HepG2 (cell line): ENCODE measurements at regions of chr1 and their contacts with region 1.

Region 1: DNA sequence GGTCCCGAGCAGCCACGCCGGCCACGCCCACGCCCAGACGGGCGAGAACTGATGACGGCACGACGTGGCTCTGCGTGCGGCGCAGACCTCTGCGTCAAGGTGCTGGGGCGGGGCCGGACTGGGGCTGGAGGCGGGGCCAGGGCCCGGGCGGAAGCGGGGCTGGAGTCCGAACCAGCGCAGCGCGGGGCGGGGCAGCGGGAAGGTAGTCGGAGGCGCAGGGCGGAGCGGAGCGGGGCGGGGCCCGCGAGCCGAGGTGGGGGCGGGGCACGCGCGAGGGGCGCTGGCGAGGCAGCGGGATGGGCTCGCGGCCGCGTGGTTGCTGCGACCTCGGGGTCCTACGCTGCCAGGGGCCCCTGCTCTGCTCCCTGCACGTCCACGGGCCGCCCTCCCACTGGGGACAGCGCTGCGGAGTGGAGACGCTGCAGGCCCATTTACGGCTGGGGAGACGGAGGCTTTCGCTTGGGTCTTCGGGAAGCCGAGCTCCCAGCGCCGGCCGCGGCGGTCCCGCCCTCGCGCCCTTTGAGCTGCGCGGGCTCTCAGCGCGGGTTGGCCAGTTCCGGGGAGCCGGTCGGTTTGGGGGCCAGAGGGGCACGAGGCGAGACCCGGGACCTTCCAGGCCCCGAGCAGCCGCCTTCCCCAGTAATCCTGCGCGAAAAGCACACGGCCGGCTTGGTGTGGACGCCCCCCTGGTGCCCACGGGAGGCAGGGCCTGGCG is at the start of gene PEX10:
- DNase-seq: peak; percentile 86
- ATAC-seq: peak; percentile 67
- H3K4me3 ChIP-seq: peak within 1 kb of the TSS; percentile 79 to 98 (median 94)
- H3K27ac ChIP-seq: peak within 1 kb of the TSS; percentile 100
- H3K4me1 ChIP-seq: peaks cover 34% of the 10 kb centered on the region
- H3K27me3 ChIP-seq: peaks cover 3 to 25% of the 10 kb centered on the region in 2 experiments; a peak in 4 of 5 replicates
- CTCF ChIP-seq: peak; percentile 13; the same call in 1 of the 2 replicates
- EP300 ChIP-seq: 0 out of 4 replicates have a peak, but pooled peaks of 1 of the 2 experiments have one; percentile 11
- POLR2A ChIP-seq: peak in 1 of 2 experiments; percentile 65; a peak in 2 of 4 replicates
- RAD21 ChIP-seq: peak; percentile 60; the same call in 1 of the 2 replicates
- total RNA-seq, gene PEX10: 38.3 and 39.6 TPM in 2 replicates

Region 2: GRCh38 chr1:2391041-2391930 is 21.4 kb before region 1 on chr1 and contains the starts of genes MORN1 and RER1:
- CTCF ChIA-PET with region 1: no interaction called
- POLR2A ChIA-PET with region 1: interaction called, 20 read pairs
- in situ Hi-C with region 1: no loop called
- intact Hi-C with region 1: no loop called
- DNase-seq: peak; percentile 95
- ATAC-seq: peak; percentile 96
- H3K4me3 ChIP-seq: peak within 1 kb of the TSS; percentile 91 to 96 (median 94)
- H3K27ac ChIP-seq: peak within 1 kb of the TSS; percentile 54
- H3K4me1 ChIP-seq: peaks cover 34% of the 10 kb centered on the region
- H3K27me3 ChIP-seq: no peaks in the 10 kb centered on the region; a peak in 1 of 5 replicates
- CTCF ChIP-seq: no peak; the same call in 1 of the 2 replicates
- EP300 ChIP-seq: peak in 1 of 2 experiments; percentile 19; a peak in 1 of 4 replicates
- POLR2A ChIP-seq: peak in 1 of 2 experiments; percentile 65; a peak in 2 of 4 replicates
- RAD21 ChIP-seq: 0 out of 2 replicates have a peak, but pooled peaks have one; percentile 26
- total RNA-seq, gene MORN1: 3.9 and 6.5 TPM in 2 replicates
- total RNA-seq, gene RER1: 83.9 and 128 TPM in 2 replicates

Region 3: GRCh38 chr1:2525920-2526823 is 113.5 kb after region 1 on chr1 and contains the start of gene PANK4:
- CTCF ChIA-PET with region 1: interaction called, 5 read pairs
- POLR2A ChIA-PET with region 1: interaction called, 16 read pairs
- in situ Hi-C with region 1: no loop called
- intact Hi-C with region 1: no loop called
- DNase-seq: peak; percentile 84
- ATAC-seq: peak; percentile 86
- H3K4me3 ChIP-seq: peak within 1 kb of the TSS; percentile 65 to 96 (median 69)
- H3K27ac ChIP-seq: peak within 1 kb of the TSS; percentile 49
- H3K4me1 ChIP-seq: peaks cover 66% of the 10 kb centered on the region
- H3K27me3 ChIP-seq: peaks cover 9 to 36% of the 10 kb centered on the region in 2 experiments
- CTCF ChIP-seq: no peak
- EP300 ChIP-seq: no peak
- POLR2A ChIP-seq: peak in 1 of 2 experiments; percentile 73; a peak in 2 of 4 replicates
- RAD21 ChIP-seq: peak; percentile 24; the same call in 1 of the 2 replicates
- total RNA-seq, gene PANK4: 9.2 and 19.3 TPM in 2 replicates

Region 4: DNA sequence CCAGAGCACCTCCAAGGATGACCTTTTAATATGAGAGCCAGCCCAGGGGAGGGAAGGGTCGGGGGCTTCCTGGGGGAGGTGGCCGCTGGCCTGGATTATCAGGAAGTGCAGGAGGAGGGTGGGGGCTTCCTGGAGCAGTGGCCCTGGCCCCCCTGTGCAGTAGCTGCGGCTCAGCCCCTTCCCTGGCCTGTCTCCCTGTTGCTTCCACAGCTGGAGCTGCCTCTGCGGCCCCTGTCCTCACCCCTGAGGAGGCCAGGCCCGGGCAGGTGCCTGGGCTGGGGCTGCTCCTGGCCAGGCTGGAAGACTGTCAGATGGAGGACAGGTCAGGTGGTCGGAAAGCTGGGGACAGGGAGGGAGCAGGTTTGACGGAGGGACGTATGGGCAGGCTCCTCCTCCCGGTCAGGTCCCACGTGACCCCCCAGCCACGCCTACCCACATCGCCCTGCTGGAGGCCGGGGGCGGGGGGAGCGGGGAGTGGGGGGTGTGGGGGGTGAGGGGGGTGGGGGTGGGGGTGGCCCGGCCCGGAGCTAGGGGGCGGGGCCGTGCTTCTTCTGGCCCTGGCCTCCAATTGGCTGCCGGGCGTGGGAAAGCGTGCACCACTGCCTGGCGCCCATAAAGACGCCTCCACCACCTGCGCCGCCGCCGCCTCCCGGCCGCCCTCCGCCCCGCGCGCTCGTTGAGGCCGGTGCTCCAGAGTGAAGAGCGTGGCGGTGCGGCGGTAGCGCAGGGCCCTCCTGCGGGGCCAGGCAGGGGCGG is 133.3 kb after region 1 on chr1:
- CTCF ChIA-PET with region 1: interaction called, 18 read pairs
- POLR2A ChIA-PET with region 1: interaction called, 29 read pairs
- in situ Hi-C with region 1: loop called (anchors 5 kb)
- intact Hi-C with region 1: loop called (anchors 1 kb)
- DNase-seq: peak; percentile 87
- ATAC-seq: peak; percentile 62
- H3K4me3 ChIP-seq: peak overlapping the region; percentile 61 to 80 (median 64)
- H3K27ac ChIP-seq: peak overlapping the region; percentile 51
- H3K4me1 ChIP-seq: peaks cover 77% of the 10 kb centered on the region
- H3K27me3 ChIP-seq: peaks cover 4 to 6% of the 10 kb centered on the region in 2 experiments; a peak in 2 of 5 replicates
- CTCF ChIP-seq: no peak
- EP300 ChIP-seq: no peak
- POLR2A ChIP-seq: peak in 1 of 2 experiments; percentile 54; a peak in 2 of 4 replicates
- RAD21 ChIP-seq: no peak

Region 5: GRCh38 chr1:2586154-2587070 is 173.7 kb after region 1 on chr1 and contains the start of gene PRXL2B:
- CTCF ChIA-PET with region 1: no interaction called
- POLR2A ChIA-PET with region 1: interaction called, 18 read pairs
- in situ Hi-C with region 1: no loop called
- intact Hi-C with region 1: no loop called
- DNase-seq: peak; percentile 94
- ATAC-seq: peak; percentile 90
- H3K4me3 ChIP-seq: peak within 1 kb of the TSS; percentile 79 to 95 (median 90)
- H3K27ac ChIP-seq: peak within 1 kb of the TSS; percentile 86
- H3K4me1 ChIP-seq: peaks cover 46% of the 10 kb centered on the region
- H3K27me3 ChIP-seq: no peaks in the 10 kb centered on the region
- CTCF ChIP-seq: no peak
- EP300 ChIP-seq: no peak
- POLR2A ChIP-seq: 0 out of 4 replicates have a peak, but pooled peaks of 1 of the 2 experiments have one; percentile 38
- RAD21 ChIP-seq: 0 out of 2 replicates have a peak, but pooled peaks have one; percentile 20
- total RNA-seq, gene PRXL2B: 14.1 and 16.8 TPM in 2 replicates

Region 6: DNA sequence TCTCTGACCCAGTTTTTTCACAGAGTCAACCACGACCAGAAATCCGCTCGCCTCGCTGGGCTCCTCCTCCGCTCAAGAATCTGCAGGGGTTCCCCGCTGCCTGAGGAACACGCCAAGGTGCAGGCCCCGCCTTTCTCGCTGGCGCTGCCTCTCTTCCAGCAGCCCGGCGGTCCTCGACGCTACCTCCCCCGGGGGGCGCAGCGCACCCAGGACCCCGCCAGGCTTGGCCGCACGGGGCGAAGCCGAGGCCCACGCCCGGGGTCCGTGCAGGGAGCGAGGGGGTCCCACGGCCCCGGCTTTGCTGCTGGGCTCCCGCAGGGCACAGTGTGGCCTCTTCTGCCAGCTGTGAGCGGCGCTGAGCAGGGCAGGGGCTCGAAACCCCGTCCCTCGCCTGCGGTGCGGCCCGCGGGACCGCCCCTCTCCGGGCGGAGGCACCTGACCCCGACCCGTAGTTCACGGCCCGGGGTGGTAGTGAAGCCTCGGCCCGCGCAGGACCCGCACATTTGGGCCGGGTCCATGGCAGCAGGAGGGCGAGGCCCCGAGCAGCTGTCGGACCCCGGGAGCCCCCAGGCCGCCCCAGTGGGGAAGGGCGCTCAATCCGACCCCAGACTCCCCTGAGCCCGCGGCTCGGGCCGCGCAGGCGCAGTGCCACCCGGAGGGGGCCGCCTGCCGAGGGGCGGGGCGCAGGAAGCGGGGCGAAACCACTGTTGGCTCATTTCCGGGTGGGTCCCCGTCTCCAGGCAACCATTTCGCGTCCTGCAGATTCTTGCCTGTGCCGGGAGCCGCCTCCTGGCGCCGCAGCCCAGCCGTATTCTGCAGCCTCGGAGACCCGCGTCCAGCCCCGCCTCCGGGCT is 230.1 kb after region 1 on chr1:
- CTCF ChIA-PET with region 1: no interaction called
- POLR2A ChIA-PET with region 1: no interaction called
- in situ Hi-C with region 1: no loop called
- intact Hi-C with region 1: loop called (anchors 2 kb)
- DNase-seq: peak; percentile 86
- ATAC-seq: peak; percentile 82
- H3K4me3 ChIP-seq: peak overlapping the region; percentile 70 to 81 (median 74)
- H3K27ac ChIP-seq: peak overlapping the region; percentile 57
- H3K4me1 ChIP-seq: peaks cover 6% of the 10 kb centered on the region; the same call in 1 of the 2 replicates
- H3K27me3 ChIP-seq: peaks cover 2 to 4% of the 10 kb centered on the region in 2 experiments; a peak in 3 of 5 replicates
- CTCF ChIP-seq: peak; percentile 50
- EP300 ChIP-seq: no peak
- POLR2A ChIP-seq: peak; percentile 61 to 84; a peak in 3 of 4 replicates
- RAD21 ChIP-seq: peak; percentile 38; the same call in 1 of the 2 replicates